GM13977 (cell line): ENCODE measurements at regions of chr4 and their contacts with region 1.

Region 1: GRCh38 chr4:109433205-109434006 is at the start of gene SEC24B:
- DNase-seq: peak; percentile 89
- CTCF ChIP-seq: peak; percentile 96

Region 2: DNA sequence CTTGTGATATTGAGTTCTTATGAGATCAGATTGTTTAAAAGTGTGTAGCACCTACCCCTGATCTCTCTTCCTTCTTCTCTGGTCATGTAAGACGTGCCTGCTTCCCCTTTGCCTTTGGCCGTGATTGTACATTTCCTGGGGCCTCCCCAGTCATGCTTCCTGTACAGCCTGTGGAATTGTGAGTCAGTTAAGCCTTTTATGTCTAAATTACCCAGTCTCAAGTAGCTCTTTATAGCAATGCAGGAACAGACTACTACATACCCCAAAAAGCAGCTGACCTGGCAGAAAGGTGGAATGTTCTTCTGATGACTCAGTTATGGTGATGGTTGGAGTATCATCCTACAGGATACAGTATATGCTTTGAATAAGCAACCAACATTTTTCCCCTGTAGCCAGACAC is 115.2 kb after region 1 on chr4:
- in situ Hi-C with region 1: loop called (anchors 25 kb)
- DNase-seq: no peak
- CTCF ChIP-seq: no peak

Region 3: DNA sequence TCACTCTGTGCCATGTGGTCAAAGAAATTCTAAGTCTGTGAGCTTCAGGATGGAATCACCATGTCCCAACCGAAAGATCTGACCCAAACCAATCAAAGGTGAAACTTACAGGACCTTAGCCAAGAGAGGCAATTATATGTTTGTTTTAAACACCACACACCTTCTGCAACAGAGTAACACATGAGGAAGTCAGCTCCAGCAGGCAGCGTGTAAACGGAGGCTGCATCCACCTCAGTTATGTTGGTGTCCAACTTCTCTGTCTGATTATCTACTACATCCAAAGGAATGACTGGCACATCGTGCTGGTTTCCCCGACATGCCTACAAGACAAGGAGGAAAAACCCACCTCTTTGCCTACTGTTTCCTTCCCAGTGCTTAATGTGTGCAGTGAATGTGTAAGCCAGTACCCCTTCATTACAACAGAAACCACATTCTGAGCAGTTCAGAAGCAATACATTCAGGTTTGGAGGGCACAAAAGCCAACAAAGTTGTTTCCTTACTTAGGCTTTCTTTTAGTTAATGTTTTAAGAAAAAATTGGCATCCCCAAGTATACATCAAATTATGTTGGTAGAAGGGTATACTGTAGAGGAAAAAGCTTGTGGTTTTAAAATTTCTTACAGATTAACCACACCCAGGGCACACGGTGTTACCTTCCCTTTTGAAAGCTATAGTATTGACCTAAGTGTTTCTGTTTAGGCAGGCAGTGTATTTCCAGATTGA is 257.4 kb after region 1 on chr4:
- in situ Hi-C with region 1: loop called (anchors 25 kb)
- DNase-seq: no peak
- CTCF ChIP-seq: no peak

Region 4: DNA sequence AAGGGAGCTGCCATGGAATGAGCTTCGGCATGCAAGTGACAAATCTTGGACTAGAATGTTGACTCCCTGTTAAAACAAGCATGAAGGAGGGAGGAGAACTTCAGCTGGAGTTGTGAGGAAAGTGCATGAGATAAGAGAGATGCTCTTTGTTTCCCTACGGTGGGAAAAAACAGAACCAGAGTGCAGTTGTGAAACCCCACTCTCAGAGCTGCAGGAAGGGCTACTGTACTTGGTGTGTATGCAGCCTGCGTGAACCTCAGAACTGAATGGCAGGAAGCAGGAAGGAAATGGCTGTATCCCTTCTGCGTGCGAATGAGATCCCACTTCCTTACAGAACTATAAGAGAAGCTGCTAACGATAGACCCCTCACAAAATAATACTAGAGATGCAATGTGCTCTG is 536.5 kb after region 1 on chr4:
- in situ Hi-C with region 1: loop called (anchors 5 kb)
- DNase-seq: no peak
- CTCF ChIP-seq: no peak

Region 5: DNA sequence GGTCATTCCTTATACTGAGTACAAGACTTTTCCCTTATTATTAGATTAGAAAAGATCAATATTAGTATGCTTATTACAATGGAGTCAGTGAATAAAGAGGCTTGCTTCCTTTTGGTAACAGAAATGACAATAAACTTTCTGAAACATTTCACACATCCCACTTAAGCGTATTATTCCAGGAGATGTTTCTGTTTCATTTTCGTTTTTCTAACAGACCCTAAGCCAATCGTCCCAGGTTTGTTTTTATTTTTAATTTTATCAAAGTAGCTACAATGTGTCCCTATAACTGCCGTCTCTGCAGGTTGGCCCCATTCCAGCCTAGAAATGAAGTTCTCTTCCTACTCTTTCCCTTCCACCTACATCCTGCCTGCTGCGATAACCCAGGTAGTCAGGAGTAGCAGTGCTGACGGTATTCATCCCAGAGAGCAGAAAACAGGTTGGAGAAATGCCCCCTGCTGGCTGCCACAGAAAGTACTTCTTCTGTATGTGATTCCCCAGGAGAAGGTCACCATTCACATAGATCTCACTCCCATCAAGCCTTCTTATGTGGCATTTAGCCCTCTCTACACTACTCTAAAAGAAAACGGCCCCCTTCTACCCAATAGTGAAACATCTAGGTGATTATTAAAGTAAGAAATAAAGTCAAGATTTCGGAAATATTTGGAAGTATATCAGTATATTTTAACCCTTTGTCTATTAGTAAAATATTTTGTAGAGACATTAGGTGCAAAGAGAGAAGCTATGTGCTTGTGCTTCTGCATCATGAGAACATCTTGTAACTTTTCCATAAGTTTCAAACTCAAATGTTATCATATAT is 1082.9 kb after region 1 on chr4:
- in situ Hi-C with region 1: loop called (anchors 25 kb)
- DNase-seq: peak; percentile 19
- CTCF ChIP-seq: peak; percentile 70